Dorsolateral prefrontal cortex (tissue), 120 donors: ENCODE measurements at regions of chr10 and their contacts with region 1.

Region 1: DNA sequence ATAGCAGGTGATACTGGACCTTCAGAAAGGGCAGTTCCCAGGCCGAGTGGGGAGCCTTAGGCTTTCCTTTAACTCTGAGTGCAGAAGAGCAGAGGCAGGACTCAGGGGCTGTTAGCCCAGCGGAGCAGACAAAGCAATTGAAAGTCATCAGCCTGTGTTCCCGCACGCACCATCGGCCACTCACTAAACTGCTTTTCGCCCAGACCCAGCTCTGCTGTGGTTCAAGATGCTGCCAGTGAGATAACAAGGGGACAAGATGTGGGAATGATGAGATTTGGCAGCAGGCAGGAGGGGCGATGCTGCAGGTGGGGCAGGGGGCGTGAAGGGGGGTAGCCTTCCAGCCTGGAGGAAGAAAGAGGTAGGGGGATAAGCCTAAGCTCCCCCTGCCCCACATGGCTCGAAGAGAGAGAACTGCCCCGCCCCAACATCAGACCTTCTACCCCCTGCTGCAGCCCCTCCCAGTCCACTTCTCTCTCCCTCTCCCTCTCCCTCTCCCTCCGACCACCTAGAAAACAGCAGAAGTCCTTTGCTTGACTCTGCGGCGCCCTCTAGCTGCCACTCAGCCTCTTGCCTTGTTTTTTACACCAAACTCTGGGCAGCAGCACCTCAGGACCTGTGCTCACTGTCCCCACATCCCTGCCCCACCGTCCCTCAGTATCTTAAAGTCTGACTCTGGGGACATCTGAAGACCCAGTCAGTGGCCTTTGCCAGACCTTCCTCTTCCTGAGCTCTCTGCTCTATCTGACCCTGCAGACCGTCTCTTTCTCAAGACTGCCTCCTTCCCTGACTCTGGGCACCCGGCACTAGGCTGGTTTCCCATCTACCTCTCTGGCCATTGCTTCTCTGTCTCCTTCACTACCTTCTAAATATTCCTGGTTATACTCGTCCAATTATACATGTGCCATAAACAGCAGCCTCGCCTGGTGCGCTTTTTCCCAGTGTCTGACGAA is 110.5 kb downstream of the C10orf105 start:
- DNase-seq: peak; percentile 82 to 94 (median 86)
- H3K4me3 ChIP-seq: peak overlapping the region in 1 of 59 donors; percentile 0
- H3K27ac ChIP-seq: peak overlapping the region in 5 of 59 donors; percentile 3 to 75 (median 32)
- H3K27me3 ChIP-seq: no peaks in the 10 kb centered on the region
- CTCF ChIP-seq: peak; percentile 57 to 90 (median 82)

Region 2: GRCh38 chr10:71486484-71487114 is 122.5 kb before region 1 on chr10:
- intact Hi-C with region 1: loop called (anchors 5 kb)
- DNase-seq: peak in 6 of 10 donors; percentile 31 to 65 (median 52)
- H3K4me3 ChIP-seq: no peak overlapping the region
- H3K27ac ChIP-seq: no peak overlapping the region
- H3K27me3 ChIP-seq: no peaks in the 10 kb centered on the region
- CTCF ChIP-seq: peak in 53 of 56 donors; percentile 14 to 73 (median 56)

Region 3: DNA sequence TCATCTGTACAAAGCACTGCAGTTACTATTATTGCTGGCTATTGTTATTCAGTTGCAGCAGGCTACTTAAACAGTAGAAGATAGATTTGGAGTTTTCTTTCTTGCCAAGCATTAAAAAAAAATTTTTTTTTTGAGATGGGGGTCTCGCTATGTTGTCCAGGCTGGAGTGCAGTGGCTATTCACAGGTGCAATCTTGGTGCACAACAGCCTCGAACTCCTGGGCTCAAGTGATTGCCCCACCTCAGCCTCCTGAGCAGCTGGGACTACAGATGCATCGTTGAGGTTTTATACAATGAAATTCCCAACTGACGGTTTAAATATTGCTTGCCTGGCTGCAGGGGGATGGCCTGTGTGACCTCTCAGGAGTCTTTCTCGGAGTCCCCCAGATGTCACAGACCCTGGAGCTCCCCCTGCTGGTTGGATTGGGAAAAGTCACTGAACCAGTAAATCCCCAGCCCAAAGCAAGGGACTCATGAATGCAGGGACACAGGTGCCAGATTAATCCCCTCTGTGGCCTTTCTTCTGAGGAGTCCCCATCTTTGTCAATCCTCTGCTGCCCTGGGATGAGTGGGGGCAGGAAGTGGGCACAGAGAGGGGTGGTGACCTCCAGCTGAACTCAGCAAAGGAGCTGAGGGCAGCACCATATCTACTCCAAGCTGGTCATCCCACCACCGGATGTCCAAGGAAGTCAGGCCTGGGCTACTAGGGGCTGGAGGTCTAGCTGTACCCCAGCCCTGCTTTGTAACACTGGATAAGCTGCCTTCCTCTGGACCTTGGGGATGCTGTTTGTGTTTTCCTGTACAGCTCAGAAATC is 39.1 kb before region 1 on chr10:
- intact Hi-C with region 1: loop called in 1 of 2 experiments (anchors 5 kb)
- DNase-seq: peak in 9 of 10 donors; percentile 52 to 83 (median 74)
- H3K4me3 ChIP-seq: no peak overlapping the region
- H3K27ac ChIP-seq: peak overlapping the region in 1 of 59 donors; percentile 18
- H3K27me3 ChIP-seq: no peaks in the 10 kb centered on the region
- CTCF ChIP-seq: peak; percentile 75 to 94 (median 87)

Region 4: DNA sequence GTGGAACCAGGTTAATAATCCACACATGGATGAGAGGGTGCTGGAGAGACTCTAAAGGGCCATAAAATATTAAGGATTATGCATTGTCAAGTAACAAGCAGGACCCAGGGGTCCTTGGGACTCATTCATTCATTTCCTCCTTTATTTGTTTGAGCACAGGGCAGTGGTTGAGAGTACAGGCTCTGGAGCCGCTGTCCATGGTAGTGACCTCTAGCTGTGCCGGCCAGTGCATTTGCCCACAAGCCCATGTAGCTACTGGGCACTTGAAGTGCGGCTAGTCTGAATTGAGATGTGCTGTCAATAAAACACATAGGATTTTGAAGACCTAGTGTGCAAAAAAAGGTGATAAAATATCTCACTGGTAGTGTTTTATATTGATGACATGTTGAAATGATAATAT is 27.1 kb before region 1 on chr10:
- intact Hi-C with region 1: loop called in 1 of 2 experiments (anchors 1 kb)
- DNase-seq: peak in 4 of 10 donors; percentile 36 to 64 (median 51)
- H3K4me3 ChIP-seq: no peak overlapping the region
- H3K27ac ChIP-seq: peak overlapping the region in 55 of 59 donors; percentile 12 to 98 (median 88)
- H3K27me3 ChIP-seq: no peaks in the 10 kb centered on the region
- CTCF ChIP-seq: peak in 6 of 56 donors; percentile 8 to 36 (median 10)

Region 5: DNA sequence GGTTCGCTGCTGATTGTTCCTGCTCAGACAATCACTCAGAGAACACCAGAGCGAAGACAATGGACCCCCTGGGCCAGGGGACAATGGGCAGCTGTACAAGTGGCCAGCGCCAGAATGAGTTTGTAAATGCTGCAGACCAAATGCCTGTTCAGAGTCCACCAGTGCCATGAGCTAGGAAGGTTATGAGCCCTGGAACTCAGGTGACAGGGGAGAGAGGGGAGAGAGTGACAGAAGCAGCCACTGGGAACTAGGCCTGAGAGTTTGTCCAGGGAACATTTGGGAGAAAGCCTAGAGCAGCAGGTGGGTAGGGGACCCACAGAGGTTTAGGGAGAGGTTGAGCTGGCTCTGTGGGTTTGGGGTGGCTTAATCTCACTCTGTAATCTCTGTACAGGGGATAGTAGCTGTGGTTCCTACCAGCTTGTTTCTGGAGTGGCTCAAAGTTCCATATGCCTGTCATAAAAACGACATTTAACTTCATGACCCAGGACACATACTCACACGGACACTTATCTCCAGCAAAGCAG is 50.1 kb after region 1 on chr10:
- intact Hi-C with region 1: no loop called
- DNase-seq: no peak
- H3K4me3 ChIP-seq: no peak overlapping the region
- H3K27ac ChIP-seq: no peak overlapping the region
- H3K27me3 ChIP-seq: no peaks in the 10 kb centered on the region
- CTCF ChIP-seq: no peak

Region 6: GRCh38 chr10:71708301-71708703 is 99.2 kb after region 1 on chr10:
- intact Hi-C with region 1: loop called in 1 of 2 experiments (anchors 5 kb)
- DNase-seq: peak; percentile 41 to 79 (median 63)
- H3K4me3 ChIP-seq: no peak overlapping the region
- H3K27ac ChIP-seq: peak overlapping the region in 1 of 59 donors; percentile 31
- H3K27me3 ChIP-seq: no peaks in the 10 kb centered on the region
- CTCF ChIP-seq: peak; percentile 55 to 95 (median 87)

Region 7: DNA sequence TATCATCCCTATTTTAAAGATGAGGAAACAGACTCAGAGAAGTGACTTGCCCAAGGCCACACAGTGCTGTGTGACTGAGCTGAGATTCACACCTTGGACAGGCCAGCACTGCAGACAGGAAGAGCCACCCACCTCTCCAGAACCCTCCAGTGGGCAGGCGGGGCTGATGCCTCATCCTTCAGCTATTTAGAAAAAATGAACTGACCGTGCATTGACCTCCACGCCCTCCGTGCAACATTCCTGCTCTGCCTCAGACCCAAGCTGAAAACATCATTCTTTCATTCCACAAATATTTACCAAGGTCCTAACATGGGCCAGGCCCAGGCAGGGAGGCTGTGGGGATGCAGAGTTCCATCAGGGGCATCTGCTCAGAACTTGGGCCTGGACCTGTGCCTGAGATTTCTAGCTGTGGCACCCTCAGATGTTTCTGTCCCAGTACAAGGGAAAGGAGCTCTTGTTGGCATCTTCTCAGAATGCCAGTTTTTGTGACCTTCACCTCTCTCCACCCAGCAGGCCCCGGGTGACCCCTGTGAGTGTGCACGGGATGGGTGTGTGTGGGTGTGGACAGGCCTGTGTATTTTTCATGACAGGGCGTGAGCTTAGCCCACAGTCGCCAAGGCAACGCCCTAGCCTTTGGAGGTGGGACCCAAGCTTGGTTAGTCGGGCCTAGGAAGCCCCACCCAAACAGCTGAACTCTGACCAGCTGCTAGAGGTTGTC is 157.8 kb after region 1 on chr10:
- intact Hi-C with region 1: loop called in 1 of 2 experiments (anchors 10 kb)
- DNase-seq: no peak
- H3K4me3 ChIP-seq: peak overlapping the region in 3 of 59 donors; percentile 4 to 78 (median 72)
- H3K27ac ChIP-seq: peak overlapping the region in 46 of 59 donors; percentile 3 to 93 (median 64)
- H3K27me3 ChIP-seq: no peaks in the 10 kb centered on the region
- CTCF ChIP-seq: no peak